WTC11 (cell line): ENCODE measurements at regions of chr16 and their contacts with region 1.

Region 1: DNA sequence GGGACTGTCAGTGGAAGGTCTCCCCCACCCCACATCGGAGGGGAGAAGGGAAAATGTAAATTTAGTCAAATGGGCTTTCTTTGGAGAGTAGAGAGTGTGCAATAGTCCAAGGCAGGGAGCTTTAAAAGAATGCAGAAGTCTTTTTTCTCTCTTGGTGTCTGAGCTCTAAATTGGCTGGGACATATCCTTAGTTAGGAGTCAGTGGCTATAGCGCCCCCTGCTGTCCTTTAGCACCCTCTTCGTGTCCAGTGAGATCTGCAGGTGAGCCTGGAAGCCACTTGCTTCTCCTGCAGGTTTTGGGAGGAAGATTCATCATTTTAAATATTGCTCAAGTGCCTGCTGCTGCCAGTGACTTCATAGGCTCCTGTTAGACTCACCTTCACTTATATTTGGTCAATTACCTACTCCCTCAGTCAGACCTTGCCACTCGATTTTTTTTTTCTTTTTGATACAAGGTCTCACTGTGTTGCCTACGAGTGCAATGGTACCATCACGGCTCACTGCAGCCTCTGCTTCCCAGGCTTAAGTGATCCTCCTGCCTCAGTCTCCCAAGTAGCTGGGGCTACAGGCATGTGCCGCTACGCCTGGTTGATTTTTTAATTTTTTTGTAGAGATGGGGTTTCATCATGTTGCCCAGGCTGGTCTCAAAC is 174.8 kb downstream of the PRKCB start:
- DNase-seq: peak; percentile 81
- ATAC-seq: peak; percentile 87
- H3K4me3 Mint-ChIP-seq: no peak overlapping the region
- H3K27ac Mint-ChIP-seq: no peak overlapping the region
- H3K4me1 Mint-ChIP-seq: 0 out of 2 replicates have a peak, but pooled peaks cover 3% of the 10 kb centered on the region
- H3K27me3 Mint-ChIP-seq: peaks cover 6% of the 10 kb centered on the region; the same call in 1 of the 2 replicates
- CTCF ChIP-seq: peak; percentile 89

Region 2: DNA sequence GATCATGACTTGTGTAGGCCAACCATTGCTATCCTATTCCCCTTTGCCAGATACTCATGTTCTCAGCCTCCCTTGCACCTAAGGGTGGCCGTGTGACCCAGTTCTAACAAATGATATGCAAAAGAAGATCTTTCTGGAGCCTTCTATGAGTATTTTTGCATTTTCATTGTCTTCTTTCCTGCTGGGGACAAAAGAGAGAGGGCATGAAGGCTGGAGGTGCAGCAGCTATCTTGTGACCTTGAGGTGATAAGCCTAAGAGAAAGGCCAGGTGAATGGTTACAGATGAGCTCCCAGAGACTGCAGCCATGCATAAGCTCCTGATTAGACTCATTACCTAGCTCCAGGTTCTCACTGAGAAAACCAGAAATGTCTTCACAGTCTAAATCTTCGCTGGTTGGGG is 213.6 kb before region 1 on chr16:
- CTCF ChIA-PET with region 1: interaction called, 65 read pairs
- POLR2A ChIA-PET with region 1: no interaction called
- DNase-seq: no peak
- ATAC-seq: no peak
- H3K4me3 Mint-ChIP-seq: no peak overlapping the region
- H3K27ac Mint-ChIP-seq: no peak overlapping the region
- H3K4me1 Mint-ChIP-seq: peaks cover 19% of the 10 kb centered on the region
- H3K27me3 Mint-ChIP-seq: peaks cover 17% of the 10 kb centered on the region
- CTCF ChIP-seq: no peak

Region 3: GRCh38 chr16:23877107-23878090 is 133.2 kb before region 1 on chr16:
- CTCF ChIA-PET with region 1: interaction called, 64 read pairs
- POLR2A ChIA-PET with region 1: no interaction called
- DNase-seq: no peak
- ATAC-seq: no peak
- H3K4me3 Mint-ChIP-seq: no peak overlapping the region
- H3K27ac Mint-ChIP-seq: no peak overlapping the region
- H3K4me1 Mint-ChIP-seq: no peaks in the 10 kb centered on the region
- H3K27me3 Mint-ChIP-seq: peaks cover 28% of the 10 kb centered on the region
- CTCF ChIP-seq: no peak

Region 4: DNA sequence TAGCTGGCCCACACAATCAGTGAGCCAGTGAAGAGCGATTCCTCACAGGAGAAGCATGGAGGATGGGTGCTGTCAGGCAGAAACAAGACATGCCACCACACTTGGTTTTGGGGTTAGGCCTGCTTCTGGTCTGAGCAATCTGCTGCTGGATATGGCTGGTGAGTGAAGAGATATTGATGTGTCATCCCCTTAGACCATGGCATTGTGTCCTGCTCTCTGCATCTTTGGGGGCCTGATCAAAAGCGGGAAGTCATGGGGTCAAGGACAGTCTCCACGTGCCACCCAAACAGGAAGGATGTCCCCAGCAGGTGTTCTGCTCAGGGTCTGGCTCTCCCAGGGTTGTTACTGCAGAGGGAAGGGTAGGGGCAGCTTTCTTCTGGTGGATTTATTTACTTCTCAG is 34.0 kb before region 1 on chr16:
- CTCF ChIA-PET with region 1: interaction called, 12 read pairs
- POLR2A ChIA-PET with region 1: no interaction called
- DNase-seq: no peak
- ATAC-seq: no peak
- H3K4me3 Mint-ChIP-seq: no peak overlapping the region
- H3K27ac Mint-ChIP-seq: no peak overlapping the region
- H3K4me1 Mint-ChIP-seq: peaks cover 20% of the 10 kb centered on the region
- H3K27me3 Mint-ChIP-seq: peaks cover 6% of the 10 kb centered on the region
- CTCF ChIP-seq: no peak

Region 5: GRCh38 chr16:23999663-24000062 is 10.9 kb before region 1 on chr16:
- CTCF ChIA-PET with region 1: interaction called, 15 read pairs
- POLR2A ChIA-PET with region 1: no interaction called
- DNase-seq: no peak
- ATAC-seq: no peak
- H3K4me3 Mint-ChIP-seq: no peak overlapping the region
- H3K27ac Mint-ChIP-seq: no peak overlapping the region
- H3K4me1 Mint-ChIP-seq: no peaks in the 10 kb centered on the region
- H3K27me3 Mint-ChIP-seq: peaks cover 7% of the 10 kb centered on the region; the same call in 1 of the 2 replicates
- CTCF ChIP-seq: no peak

Region 6: DNA sequence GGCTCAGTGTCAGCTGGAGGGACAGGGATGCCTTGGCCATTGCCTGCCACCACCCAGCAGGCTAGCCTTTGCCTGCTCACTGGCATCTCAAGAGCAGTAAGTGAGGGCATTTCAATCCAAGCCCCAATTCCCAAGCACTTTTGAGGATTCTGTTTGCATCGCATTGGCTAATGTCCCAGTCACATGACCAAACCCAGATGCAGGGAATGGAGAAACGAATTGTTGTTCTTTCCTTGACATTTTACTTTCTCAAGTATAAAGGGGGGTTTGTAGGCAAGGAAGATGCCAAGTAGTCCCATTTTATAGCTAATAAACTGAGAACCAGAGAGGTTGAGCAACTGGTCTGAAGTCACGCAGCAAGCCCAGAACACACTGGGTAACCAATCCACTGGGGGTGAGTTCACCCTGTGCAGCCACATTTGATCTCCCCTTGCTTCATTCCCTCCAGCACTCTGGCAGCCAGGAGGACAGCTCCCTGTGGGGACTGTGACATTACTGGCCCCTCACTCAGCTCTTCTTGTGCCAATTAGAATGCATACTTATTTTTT is 51.8 kb after region 1 on chr16:
- CTCF ChIA-PET with region 1: no interaction called
- POLR2A ChIA-PET with region 1: no interaction called
- DNase-seq: no peak
- ATAC-seq: no peak
- H3K4me3 Mint-ChIP-seq: no peak overlapping the region
- H3K27ac Mint-ChIP-seq: no peak overlapping the region
- H3K4me1 Mint-ChIP-seq: peaks cover 9% of the 10 kb centered on the region
- H3K27me3 Mint-ChIP-seq: no peaks in the 10 kb centered on the region; the same call in 1 of the 2 replicates
- CTCF ChIP-seq: no peak